ENCODE measurements at regions of chr11 and their contacts with region 1.

Region 1: DNA sequence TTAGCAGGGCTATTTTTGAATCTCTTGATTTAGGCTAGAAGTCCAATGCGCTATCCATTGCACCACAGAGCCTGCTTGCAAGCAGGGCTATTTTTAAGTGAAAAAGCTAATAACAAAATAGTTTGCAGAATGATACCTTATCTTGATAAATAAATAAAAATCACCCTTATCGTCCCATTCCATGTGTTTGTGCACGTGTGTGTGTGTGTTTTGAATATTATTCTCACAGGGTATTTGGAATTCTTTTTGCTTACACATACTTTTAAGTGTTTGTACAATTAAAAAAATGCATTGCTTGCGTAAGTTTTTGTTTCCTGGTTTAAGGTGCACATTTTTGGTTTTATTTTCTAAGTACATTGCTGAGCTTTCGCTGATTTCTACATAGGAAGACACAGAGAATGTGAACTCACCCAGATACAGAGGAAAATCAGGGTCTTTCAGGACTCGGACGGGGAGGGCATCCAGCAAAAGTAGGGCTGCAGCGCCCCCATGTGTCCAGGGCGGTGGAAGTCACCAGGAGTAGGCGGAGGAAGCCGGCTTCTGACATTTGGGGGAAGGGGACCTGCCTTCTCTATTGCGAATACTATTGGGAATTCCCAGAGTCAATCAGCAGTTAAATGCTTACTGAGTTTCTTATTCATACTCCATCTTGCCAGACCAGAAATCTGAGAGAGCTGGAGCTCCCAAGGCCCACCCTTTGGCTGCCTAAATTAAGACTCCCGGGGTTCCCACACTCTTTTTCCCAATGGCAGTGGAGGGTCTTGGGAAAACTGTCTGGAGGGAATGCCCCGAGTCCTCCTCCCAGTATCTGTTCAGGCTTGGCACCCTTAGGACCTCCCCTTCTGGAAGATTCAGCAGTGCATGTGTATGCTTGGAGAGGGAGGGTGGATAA is 27.2 kb downstream of the SLC1A2 start:
- DNase-seq: peak; percentile 68
- H3K4me3 ChIP-seq: no peak overlapping the region
- H3K27ac ChIP-seq: peak overlapping the region; percentile 54 to 84
- H3K4me1 ChIP-seq: no peaks in the 10 kb centered on the region
- H3K27me3 ChIP-seq: no peaks in the 10 kb centered on the region
- CTCF ChIP-seq: peak; percentile 59 to 89 (median 89)
- POLR2A ChIP-seq: no peak

Region 2: DNA sequence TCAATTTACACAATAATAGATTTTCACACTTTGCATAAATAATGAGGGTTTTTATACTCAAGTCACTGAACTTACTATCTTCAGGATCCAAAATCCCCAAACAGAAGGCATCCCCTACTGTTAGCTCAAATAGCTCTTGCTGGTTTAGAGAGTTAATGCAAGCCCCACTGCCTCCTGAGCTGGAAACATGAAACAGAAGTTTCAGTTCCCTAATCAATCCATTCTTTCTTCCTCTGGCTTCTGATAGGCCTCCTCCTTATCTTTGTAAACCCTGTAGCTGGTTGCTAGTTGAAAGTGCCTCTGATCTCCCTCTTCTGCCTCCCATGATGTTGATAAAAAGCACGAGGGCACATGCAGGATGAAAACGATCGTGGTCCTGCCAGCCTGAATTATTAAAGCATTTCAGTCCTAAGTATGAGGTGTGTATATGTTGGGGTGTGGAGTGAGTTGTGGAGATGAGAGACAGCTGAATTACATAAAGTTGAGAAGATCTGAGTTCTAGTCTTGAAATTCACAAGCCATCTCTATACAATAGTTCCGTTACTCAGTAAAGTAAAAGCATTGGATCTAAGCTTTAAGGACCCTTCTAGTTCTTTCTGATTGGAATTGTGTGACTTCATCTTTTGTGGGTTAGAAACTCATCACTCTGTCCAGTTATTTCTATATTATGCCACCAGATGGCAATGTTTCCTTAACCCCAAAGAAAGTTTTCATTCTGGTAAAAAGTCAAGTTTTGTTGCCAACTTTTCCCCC is 806.3 kb before region 1 on chr11:
- intact Hi-C with region 1: loop called (anchors 5 kb)
- DNase-seq: peak; percentile 44
- H3K4me3 ChIP-seq: no peak overlapping the region
- H3K27ac ChIP-seq: peak overlapping the region; percentile 61 to 71
- H3K4me1 ChIP-seq: peaks cover 7% of the 10 kb centered on the region
- H3K27me3 ChIP-seq: no peaks in the 10 kb centered on the region
- CTCF ChIP-seq: peak; percentile 63 to 88 (median 77)
- POLR2A ChIP-seq: no peak

Region 3: DNA sequence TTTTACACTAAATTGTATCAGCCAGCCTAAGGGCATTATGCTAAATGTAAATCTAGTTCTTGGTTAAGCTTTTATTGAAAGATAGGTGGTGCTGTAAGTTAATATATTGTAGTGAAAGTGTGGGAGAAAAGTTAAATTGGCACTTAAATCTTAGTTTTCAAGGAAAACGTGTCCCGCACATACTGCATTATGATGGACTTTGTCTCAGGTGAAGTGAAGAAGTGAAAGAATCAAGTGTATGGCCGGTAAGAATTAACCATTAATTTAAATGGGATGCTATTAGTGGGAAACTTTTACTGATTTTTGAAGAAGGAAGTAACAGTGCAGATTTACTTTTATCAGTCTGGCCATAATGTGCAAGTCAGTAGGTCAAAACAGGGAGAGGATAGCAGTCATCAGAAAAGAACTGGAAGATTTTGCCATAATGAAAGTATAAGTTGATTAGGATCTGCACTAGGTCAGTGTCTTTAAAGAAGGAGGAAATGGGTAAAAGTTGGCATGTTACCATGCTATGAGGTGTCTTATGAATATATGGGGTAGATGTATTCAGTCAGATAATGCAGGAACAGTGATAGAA is 394.1 kb before region 1 on chr11:
- intact Hi-C with region 1: loop called (anchors 5 kb)
- DNase-seq: no peak
- H3K4me3 ChIP-seq: no peak overlapping the region
- H3K27ac ChIP-seq: no peak overlapping the region
- H3K4me1 ChIP-seq: no peaks in the 10 kb centered on the region
- H3K27me3 ChIP-seq: no peaks in the 10 kb centered on the region
- CTCF ChIP-seq: peak in 3 of 4 experiments; percentile 37 to 79 (median 67)
- POLR2A ChIP-seq: no peak

Region 4: GRCh38 chr11:35276396-35277145 is 115.6 kb before region 1 on chr11:
- intact Hi-C with region 1: no loop called
- DNase-seq: peak; percentile 52
- H3K4me3 ChIP-seq: no peak overlapping the region
- H3K27ac ChIP-seq: peak overlapping the region; percentile 53 to 61
- H3K4me1 ChIP-seq: peaks cover 16% of the 10 kb centered on the region
- H3K27me3 ChIP-seq: no peaks in the 10 kb centered on the region
- CTCF ChIP-seq: no peak
- POLR2A ChIP-seq: no peak

Measured in prostate gland (tissue), 2 donors.